ENCODE measurements at regions of chrX and their contacts with region 1.

Region 1: GRCh38 chrX:14939644-14940043 is 66.4 kb downstream of the MOSPD2 start:
- DNase-seq: no peak
- ATAC-seq: no peak
- H3K4me3 ChIP-seq: no peak overlapping the region
- H3K27ac ChIP-seq: no peak overlapping the region
- H3K4me1 ChIP-seq: no peaks in the 10 kb centered on the region
- H3K27me3 ChIP-seq: no peaks in the 10 kb centered on the region
- CTCF ChIP-seq: no peak
- EP300 ChIP-seq: no peak
- POLR2A ChIP-seq: no peak
- RAD21 ChIP-seq: no peak

Region 2: DNA sequence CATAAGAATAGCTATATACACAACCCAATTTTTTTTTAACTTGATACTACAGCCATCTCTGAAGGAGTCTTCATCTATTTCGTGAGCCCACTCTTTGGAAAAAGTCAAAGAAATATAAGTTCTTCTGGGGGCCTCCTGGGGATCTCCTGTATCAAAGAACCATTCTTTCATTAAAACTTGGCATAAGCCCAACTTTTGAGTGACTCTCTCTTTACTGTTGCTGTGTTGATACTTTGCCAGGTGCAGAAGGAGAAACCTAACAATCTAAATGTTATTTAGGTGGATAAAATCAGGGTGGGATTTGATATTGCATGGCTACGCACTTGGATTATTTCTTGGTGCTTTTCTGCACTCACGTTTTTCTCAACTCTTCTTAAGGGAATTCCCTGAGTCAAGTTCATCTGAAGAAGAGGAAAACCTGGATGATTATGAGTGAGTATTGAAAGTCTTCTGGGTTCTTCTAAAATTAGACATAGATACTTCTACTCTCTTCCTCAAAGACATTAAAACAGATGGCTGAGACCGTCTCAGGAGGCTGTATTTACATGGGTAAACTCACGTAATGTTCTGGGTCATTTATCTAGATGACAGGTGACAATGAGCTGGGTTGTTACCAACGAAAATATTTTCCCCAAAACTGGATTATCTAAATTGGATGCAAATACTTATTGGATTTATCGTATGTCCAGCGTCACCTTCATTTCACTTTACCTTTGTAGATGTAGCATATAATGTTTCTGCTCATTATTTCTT is 586.2 kb after region 1 on chrX:
- CTCF ChIA-PET with region 1: no interaction called
- POLR2A ChIA-PET with region 1: no interaction called
- in situ Hi-C with region 1: no loop called
- intact Hi-C with region 1: loop called (anchors 5 kb)
- DNase-seq: no peak
- ATAC-seq: no peak
- H3K4me3 ChIP-seq: no peak overlapping the region
- H3K27ac ChIP-seq: no peak overlapping the region
- H3K4me1 ChIP-seq: no peaks in the 10 kb centered on the region
- H3K27me3 ChIP-seq: no peaks in the 10 kb centered on the region
- CTCF ChIP-seq: no peak
- EP300 ChIP-seq: no peak
- POLR2A ChIP-seq: no peak
- RAD21 ChIP-seq: no peak